Activated T-helper 2 cell treated with anti-CD3 and anti-CD28 coated beads, Interferon-gamma antibody, Interleukin-2, Interleukin-4, amounts not matched to agents 10 μg/mL and 5 μg/mL and 100 μg/mL, durations not matched to agents 14 hours and 24 hours and 36 hours (primary cell): ENCODE measurements at regions of chr3 and their contacts with region 1.

Region 1: DNA sequence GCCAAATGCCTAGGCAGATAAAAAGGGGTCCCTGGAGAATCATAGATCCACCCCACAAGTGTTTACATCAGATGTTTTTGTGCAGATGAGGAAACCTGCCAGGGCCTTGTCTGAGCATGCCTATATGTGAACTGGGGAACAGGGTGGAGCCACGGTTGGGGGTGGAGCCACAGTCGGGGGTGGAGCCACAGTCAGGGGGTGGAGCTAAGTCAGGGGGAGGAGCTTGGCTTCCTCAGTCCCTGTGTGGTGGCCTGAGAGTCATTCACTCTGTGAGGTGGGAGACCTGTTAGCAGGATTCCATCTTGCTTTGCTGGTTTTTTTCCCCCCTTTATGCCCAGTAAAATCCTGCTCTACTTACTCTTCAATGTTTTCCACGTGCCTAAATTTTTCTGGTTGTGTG is 57.8 kb upstream of the TGFBR2 start:
- DNase-seq: no peak
- H3K4me3 Mint-ChIP-seq: no peak overlapping the region
- H3K27ac Mint-ChIP-seq: no peak overlapping the region
- H3K4me1 Mint-ChIP-seq: peaks cover 7% of the 10 kb centered on the region
- H3K27me3 Mint-ChIP-seq: no peaks in the 10 kb centered on the region

Region 2: GRCh38 chr3:29731050-29731449 is 817.5 kb before region 1 on chr3:
- intact Hi-C with region 1: no loop called
- DNase-seq: no peak
- H3K4me3 Mint-ChIP-seq: no peak overlapping the region
- H3K27ac Mint-ChIP-seq: no peak overlapping the region
- H3K4me1 Mint-ChIP-seq: no peaks in the 10 kb centered on the region
- H3K27me3 Mint-ChIP-seq: no peaks in the 10 kb centered on the region

Region 3: GRCh38 chr3:30597131-30597768 is 48.6 kb after region 1 on chr3:
- intact Hi-C with region 1: loop called (anchors 5 kb)
- DNase-seq: no peak
- H3K4me3 Mint-ChIP-seq: no peak overlapping the region
- H3K27ac Mint-ChIP-seq: no peak overlapping the region
- H3K4me1 Mint-ChIP-seq: peaks cover 29% of the 10 kb centered on the region
- H3K27me3 Mint-ChIP-seq: no peaks in the 10 kb centered on the region